ENCODE measurements at regions of chr1 and their contacts with region 1.

Region 1: DNA sequence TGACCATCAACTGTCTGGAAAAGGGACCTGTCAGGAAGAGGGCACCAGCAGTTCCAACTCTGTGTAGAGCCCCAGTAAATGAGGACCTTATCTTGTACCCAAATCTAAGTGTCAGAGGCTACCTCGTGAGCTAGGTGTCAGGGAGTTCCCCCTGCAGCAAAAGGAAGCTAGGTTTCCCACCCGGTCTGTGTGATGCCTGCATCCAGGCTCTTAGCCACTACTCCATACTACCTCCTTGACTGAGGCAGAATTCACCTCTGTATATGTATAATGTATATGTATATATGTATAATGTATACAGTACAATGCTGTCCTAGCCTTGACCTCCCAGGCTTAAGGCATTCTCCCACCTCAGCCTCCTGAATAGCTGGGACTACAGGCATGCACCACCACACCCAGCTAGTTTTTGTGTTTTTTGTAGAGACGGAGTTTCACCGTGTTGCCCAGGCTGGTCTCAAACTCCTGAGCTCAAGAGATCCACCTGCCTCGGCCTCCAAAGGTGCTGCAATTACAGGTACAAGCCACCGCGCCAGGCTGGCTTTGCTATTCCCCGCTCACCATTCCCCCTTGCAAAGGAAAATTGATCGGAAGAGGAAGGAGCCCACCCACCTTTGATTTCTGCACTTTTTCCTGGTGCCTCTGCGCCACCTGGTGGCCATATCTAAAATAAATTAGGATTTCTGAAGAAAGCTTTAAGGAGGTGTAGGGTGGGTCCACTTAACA is 15.7 kb upstream of the LUZP1 start:
- DNase-seq: peak; percentile 16 to 33 (median 28)
- ATAC-seq: no peak
- H3K4me3 ChIP-seq: no peak overlapping the region
- H3K27ac ChIP-seq: no peak overlapping the region
- H3K4me1 ChIP-seq: peaks cover 5% of the 10 kb centered on the region
- H3K27me3 ChIP-seq: no peaks in the 10 kb centered on the region
- CTCF ChIP-seq: peak; percentile 53 to 85 (median 76)
- POLR2A ChIP-seq: no peak

Region 2: DNA sequence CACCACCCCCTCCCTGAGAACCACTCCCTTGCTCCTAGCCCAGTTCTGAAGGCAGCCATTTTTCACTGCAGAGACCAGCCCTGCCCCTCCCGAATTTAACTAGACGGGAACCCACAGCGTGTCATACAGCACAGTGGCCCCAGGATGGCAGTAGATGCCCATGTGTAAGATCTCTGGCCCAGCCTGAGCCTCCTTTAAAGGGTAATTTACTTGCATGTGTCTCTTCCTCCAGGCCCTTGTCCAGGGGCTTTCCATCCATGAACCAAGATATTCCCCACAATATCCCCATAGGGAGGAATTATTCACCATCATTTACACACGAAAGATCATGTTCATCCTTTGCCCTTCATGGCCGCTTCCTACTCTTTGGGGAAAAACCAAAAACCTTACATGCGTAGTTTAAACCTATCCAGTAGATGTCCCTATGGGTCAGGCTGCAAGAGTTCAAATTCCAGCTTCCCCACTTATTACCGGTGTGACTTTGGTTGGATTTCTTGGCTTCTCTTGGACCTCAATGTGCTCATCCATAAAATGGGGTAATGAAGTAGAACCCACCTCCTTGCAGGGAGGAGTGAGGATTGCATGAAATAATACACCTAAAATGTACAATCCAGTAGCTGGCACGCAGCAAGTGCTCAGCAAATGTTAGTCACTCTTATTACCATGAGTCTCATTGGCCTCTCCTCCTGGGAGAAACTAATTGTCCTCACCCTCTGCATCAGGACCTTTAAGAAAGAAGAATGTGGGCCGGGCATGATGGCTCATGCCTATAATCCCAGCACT is 207.7 kb before region 1 on chr1:
- intact Hi-C with region 1: loop called (anchors 10 kb)
- DNase-seq: peak; percentile 61 to 77 (median 68)
- ATAC-seq: peak; percentile 93
- H3K4me3 ChIP-seq: no peak overlapping the region
- H3K27ac ChIP-seq: no peak overlapping the region
- H3K4me1 ChIP-seq: no peaks in the 10 kb centered on the region
- H3K27me3 ChIP-seq: no peaks in the 10 kb centered on the region
- CTCF ChIP-seq: peak; percentile 50 to 88 (median 70)
- POLR2A ChIP-seq: no peak

Region 3: GRCh38 chr1:23097316-23097715 is 87.1 kb before region 1 on chr1:
- intact Hi-C with region 1: loop called (anchors 2 kb)
- DNase-seq: no peak
- ATAC-seq: no peak
- H3K4me3 ChIP-seq: no peak overlapping the region
- H3K27ac ChIP-seq: no peak overlapping the region
- H3K4me1 ChIP-seq: no peaks in the 10 kb centered on the region
- H3K27me3 ChIP-seq: no peaks in the 10 kb centered on the region
- CTCF ChIP-seq: no peak
- POLR2A ChIP-seq: no peak

Region 4: GRCh38 chr1:23354245-23354644 is 169.9 kb after region 1 on chr1:
- intact Hi-C with region 1: no loop called
- DNase-seq: no peak
- ATAC-seq: no peak
- H3K4me3 ChIP-seq: no peak overlapping the region
- H3K27ac ChIP-seq: no peak overlapping the region
- H3K4me1 ChIP-seq: no peaks in the 10 kb centered on the region
- H3K27me3 ChIP-seq: no peaks in the 10 kb centered on the region
- CTCF ChIP-seq: no peak
- POLR2A ChIP-seq: no peak

Measured in body of pancreas (tissue), 4 donors.